ENCODE measurements at regions of chr19 and their contacts with region 1.

Region 1: DNA sequence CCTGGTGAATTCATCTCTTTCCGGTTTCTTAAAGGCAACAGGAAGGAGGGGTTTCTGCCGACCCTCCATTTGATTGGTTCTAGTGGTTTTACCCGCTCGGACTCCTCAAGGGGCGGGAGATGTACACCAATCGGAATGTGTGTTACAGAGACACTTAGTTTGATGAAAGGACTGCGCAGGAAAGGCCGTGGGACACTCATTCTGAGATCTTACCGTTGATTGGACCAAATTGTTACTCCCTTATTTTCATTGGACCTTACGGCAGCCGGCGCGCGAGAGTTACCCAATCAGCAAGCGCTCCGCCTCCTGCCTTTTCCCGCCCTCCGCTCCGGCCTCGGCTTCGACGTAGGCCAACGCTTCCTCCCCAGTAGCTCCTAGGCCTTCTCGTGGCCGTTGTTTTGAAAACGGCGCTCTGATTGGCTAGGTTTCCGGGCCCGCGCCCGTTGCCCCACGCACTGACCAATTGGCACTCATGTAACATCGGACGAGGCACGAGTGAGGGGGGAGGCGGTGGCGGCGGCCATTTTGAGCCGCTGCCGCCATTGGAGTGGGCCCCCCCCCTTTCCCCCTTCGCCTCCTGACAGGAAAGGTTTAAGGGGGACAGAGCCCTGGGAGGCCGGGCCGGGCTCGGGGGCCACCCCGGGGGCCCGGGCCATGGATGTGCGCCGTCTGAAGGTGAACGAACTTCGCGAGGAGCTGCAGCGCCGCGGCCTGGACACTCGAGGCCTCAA is at the start of gene HNRNPUL1:
- DNase-seq: peak; percentile 95 to 100 (median 100)
- ATAC-seq: peak; percentile 55 to 57
- H3K4me3 Mint-ChIP-seq: peak within 1 kb of the TSS; percentile 82 to 100 (median 98)
- H3K27ac Mint-ChIP-seq: peak within 1 kb of the TSS; percentile 100
- H3K4me1 Mint-ChIP-seq: peaks cover 34 to 63% (median 48%) of the 10 kb centered on the region in 4 donors
- H3K27me3 Mint-ChIP-seq: peaks cover 0 to 9% (median 0%) of the 10 kb centered on the region in 5 donors
- polyA plus RNA-seq, gene HNRNPUL1: 40.7 to 67.6 (median 46.1) TPM

Region 2: GRCh38 chr19:40777937-40778705 is 485.9 kb before region 1 on chr19 and contains the start of gene RAB4B:
- POLR2A ChIA-PET with region 1: interaction called, 31 read pairs
- DNase-seq: peak; percentile 99 to 100 (median 100)
- ATAC-seq: peak; percentile 85 to 86
- H3K4me3 Mint-ChIP-seq: peak within 1 kb of the TSS; percentile 88 to 97 (median 94)
- H3K27ac Mint-ChIP-seq: peak within 1 kb of the TSS; percentile 89 to 100 (median 98)
- H3K4me1 Mint-ChIP-seq: peaks cover 28 to 44% (median 42%) of the 10 kb centered on the region in 4 donors
- H3K27me3 Mint-ChIP-seq: peaks cover 0 to 2% (median 0%) of the 10 kb centered on the region in 5 donors
- polyA plus RNA-seq, gene RAB4B: 76.4 to 87.2 (median 87.1) TPM

Region 3: GRCh38 chr19:41112728-41113290 is 151.2 kb before region 1 on chr19:
- POLR2A ChIA-PET with region 1: no interaction called
- DNase-seq: no peak
- ATAC-seq: no peak
- H3K4me3 Mint-ChIP-seq: no peak overlapping the region
- H3K27ac Mint-ChIP-seq: no peak overlapping the region
- H3K4me1 Mint-ChIP-seq: peaks cover 0 to 7% (median 0%) of the 10 kb centered on the region in 4 donors
- H3K27me3 Mint-ChIP-seq: peaks cover 0 to 5% (median 0%) of the 10 kb centered on the region in 5 donors

Region 4: GRCh38 chr19:41226053-41226873 is 37.8 kb before region 1 on chr19:
- POLR2A ChIA-PET with region 1: interaction called, 38 read pairs
- DNase-seq: peak in 8 of 10 donors; percentile 8 to 68 (median 32)
- ATAC-seq: peak; percentile 70 to 77
- H3K4me3 Mint-ChIP-seq: peak overlapping the region; percentile 75 to 92 (median 86)
- H3K27ac Mint-ChIP-seq: peak overlapping the region; percentile 62 to 95 (median 84)
- H3K4me1 Mint-ChIP-seq: peaks cover 14 to 22% (median 16%) of the 10 kb centered on the region in 4 donors
- H3K27me3 Mint-ChIP-seq: peaks cover 5 to 30% (median 13%) of the 10 kb centered on the region in 5 donors

Region 5: GRCh38 chr19:41298348-41298964 is 34.4 kb after region 1 on chr19:
- POLR2A ChIA-PET with region 1: interaction called, 300 read pairs
- DNase-seq: peak in 6 of 10 donors; percentile 40 to 70 (median 52)
- ATAC-seq: peak; percentile 34 to 42
- H3K4me3 Mint-ChIP-seq: peak overlapping the region in 9 of 10 donors; percentile 5 to 64 (median 52)
- H3K27ac Mint-ChIP-seq: peak overlapping the region; percentile 82 to 99 (median 92)
- H3K4me1 Mint-ChIP-seq: peaks cover 50 to 86% (median 78%) of the 10 kb centered on the region in 4 donors
- H3K27me3 Mint-ChIP-seq: no peaks in the 10 kb centered on the region

Region 6: DNA sequence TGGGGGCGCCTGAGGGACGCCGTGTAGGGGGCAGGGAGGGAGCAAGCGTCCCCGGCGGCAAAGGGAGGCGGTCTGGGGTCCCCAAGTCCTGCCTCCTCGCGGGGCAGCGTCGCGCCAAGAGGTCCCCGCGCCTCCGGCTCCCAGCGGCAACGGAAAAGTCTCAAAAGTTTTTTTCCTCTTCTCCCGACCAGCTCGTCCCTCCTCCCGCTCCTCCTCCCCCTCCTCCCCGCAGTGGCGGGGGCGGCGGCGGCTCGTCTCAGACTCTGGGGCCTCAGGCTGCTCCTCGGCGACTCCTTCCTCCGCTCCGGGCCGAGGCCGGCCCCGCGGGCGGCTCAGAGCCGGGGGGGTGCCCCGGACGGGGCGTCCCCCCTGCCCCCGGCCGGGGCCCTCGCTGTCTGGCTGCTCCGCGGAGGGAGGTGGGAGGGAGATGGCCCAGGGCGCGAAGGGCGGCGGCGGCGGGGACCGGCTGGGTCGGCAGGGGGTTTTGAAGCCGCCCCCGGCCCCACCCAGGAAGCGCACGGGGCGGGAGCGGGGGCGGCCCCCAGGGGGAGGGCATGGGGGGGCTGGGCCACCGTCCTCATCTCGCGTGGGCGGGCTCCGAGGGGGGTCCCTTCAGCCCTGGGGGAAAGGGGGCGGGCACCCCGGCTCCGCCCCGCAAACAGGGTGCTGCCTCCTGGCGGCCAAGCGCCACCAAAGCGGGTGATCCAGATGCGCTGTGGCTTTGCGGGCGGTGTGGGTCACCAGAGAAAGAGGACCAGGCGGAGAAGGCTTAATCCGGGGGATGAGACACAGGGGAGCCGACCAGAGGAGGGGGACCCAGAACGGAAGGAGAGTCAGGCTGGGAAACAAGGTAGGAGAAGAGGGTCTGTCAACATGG is 89.7 kb after region 1 on chr19 and contains the start of gene TGFB1:
- POLR2A ChIA-PET with region 1: interaction called, 69 read pairs
- DNase-seq: peak; percentile 93 to 97 (median 95)
- ATAC-seq: peak; percentile 55 to 57
- H3K4me3 Mint-ChIP-seq: peak within 1 kb of the TSS; percentile 92 to 100 (median 99)
- H3K27ac Mint-ChIP-seq: peak within 1 kb of the TSS; percentile 94 to 99 (median 98)
- H3K4me1 Mint-ChIP-seq: peaks cover 45 to 83% (median 69%) of the 10 kb centered on the region in 4 donors
- H3K27me3 Mint-ChIP-seq: no peaks in the 10 kb centered on the region
- polyA plus RNA-seq, gene TGFB1: 30.5 to 45.4 (median 34.5) TPM

Region 7: DNA sequence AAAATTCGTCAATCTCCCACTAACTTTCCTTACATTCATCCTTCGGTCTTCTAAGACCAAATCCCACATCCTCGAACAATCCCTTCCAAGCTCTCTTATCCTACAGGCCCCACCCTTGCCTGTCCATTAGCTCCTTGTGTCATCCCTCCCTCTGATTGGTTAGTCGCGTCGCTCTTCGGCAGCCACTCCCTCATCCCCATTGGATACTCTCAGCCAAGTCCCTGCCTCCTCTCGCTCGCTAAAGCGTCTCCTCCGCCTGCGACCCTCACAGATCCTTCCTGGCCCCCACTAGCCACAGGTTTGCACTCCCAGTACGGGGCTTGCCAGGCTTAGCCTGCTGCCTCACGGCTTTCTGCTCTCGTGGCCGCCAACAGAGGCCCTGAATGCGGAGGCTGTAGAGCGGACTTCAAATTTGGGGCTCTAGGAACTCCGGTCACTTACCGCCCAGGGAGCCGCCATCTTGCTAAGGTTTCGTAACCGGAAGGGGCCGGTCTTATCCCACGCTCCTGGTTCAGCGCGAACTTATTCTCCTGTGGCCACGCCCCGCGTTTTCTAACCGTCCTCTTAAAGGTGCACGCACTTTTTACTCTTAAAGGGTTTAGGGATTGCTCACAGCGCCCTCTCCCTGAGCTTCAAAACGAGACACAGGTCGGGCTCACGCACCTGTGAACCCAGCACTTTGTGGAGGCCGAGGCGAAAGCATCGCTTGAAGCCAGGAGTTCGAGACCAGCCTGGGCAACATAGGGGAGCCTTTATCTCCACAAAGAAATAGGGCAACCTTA is 175.6 kb after region 1 on chr19 and contains the start of gene DMAC2:
- POLR2A ChIA-PET with region 1: interaction called, 20 read pairs
- DNase-seq: peak; percentile 80 to 96 (median 90)
- ATAC-seq: peak; percentile 98 to 99
- H3K4me3 Mint-ChIP-seq: peak within 1 kb of the TSS in 2 of 10 donors; percentile 24 to 29
- H3K27ac Mint-ChIP-seq: peak within 1 kb of the TSS in 6 of 10 donors; percentile 48 to 85 (median 74)
- H3K4me1 Mint-ChIP-seq: peaks cover 8 to 23% (median 13%) of the 10 kb centered on the region in 4 donors
- H3K27me3 Mint-ChIP-seq: peaks cover 0 to 9% (median 0%) of the 10 kb centered on the region in 5 donors
- polyA plus RNA-seq, gene DMAC2: 50.6 to 53.7 (median 52.4) TPM